Activated naive CD8-positive, alpha-beta T cell treated with anti-CD3 and anti-CD28 coated beads, Interleukin-2, amount 10 ng/mL, durations not matched to agents 7 days and 5 days (primary cell): ENCODE measurements at regions of chr1 and their contacts with region 1.

Region 1: GRCh38 chr1:172719694-172720138 is 60.8 kb downstream of the FASLG start:
- DNase-seq: no peak
- ATAC-seq: peak; percentile 40
- H3K4me3 Mint-ChIP-seq: peak overlapping the region; percentile 2
- H3K27ac Mint-ChIP-seq: peak overlapping the region; percentile 6
- H3K4me1 Mint-ChIP-seq: peaks cover 37% of the 10 kb centered on the region
- H3K27me3 Mint-ChIP-seq: peaks cover under 1% of the 10 kb centered on the region

Region 2: GRCh38 chr1:172609528-172609927 is 110.2 kb before region 1 on chr1:
- POLR2A ChIA-PET with region 1: interaction called, 13 read pairs
- DNase-seq: no peak
- ATAC-seq: peak; percentile 70
- H3K4me3 Mint-ChIP-seq: no peak overlapping the region
- H3K27ac Mint-ChIP-seq: no peak overlapping the region
- H3K4me1 Mint-ChIP-seq: peaks cover 13% of the 10 kb centered on the region
- H3K27me3 Mint-ChIP-seq: no peaks in the 10 kb centered on the region

Region 3: DNA sequence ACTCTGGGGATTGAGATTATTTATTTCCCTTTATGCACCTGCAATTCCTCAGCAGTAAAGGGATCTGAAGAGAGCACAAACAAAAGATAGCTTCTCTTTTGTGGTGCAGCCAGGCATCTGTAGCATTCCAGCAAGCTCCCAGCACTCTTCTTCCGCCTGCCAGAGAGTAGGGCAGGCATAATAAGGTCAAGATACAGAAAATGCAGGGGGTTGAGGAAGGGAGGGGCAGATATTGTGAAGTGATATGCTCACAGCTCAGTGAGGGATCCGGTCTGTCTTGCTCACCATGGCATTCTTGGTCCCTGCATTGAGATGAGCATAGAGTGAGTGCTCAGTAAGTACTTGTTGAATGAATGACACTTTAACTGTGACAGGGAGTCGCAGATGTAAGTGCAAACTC is 36.9 kb before region 1 on chr1:
- POLR2A ChIA-PET with region 1: no interaction called
- DNase-seq: no peak
- ATAC-seq: no peak
- H3K4me3 Mint-ChIP-seq: no peak overlapping the region
- H3K27ac Mint-ChIP-seq: no peak overlapping the region
- H3K4me1 Mint-ChIP-seq: peaks cover 13% of the 10 kb centered on the region
- H3K27me3 Mint-ChIP-seq: peaks cover 6% of the 10 kb centered on the region

Region 4: DNA sequence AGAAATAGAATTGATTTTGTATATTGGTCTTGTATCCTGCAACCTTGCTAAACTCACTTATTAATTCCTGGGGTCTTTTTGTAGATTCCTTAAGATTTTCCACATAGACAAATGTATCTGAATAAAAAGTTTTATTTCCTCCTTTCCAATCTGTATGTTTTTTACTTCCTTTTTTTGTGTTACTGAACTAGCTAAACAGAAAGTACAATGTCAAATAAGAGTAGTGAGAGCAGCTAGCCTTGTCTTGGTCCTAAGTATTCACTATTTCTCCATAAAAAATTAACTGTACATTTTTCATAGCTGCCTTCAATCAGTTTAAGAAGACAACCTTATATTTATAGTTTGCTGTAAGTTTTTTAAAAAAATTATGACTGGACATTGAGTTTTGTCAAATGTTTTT is 14.1 kb after region 1 on chr1:
- POLR2A ChIA-PET with region 1: no interaction called
- DNase-seq: no peak
- ATAC-seq: no peak
- H3K4me3 Mint-ChIP-seq: no peak overlapping the region
- H3K27ac Mint-ChIP-seq: no peak overlapping the region
- H3K4me1 Mint-ChIP-seq: peaks cover 2% of the 10 kb centered on the region
- H3K27me3 Mint-ChIP-seq: peaks cover 50% of the 10 kb centered on the region